Panc1 (cell line): ENCODE measurements at regions of chr2 and their contacts with region 1.

Region 1: DNA sequence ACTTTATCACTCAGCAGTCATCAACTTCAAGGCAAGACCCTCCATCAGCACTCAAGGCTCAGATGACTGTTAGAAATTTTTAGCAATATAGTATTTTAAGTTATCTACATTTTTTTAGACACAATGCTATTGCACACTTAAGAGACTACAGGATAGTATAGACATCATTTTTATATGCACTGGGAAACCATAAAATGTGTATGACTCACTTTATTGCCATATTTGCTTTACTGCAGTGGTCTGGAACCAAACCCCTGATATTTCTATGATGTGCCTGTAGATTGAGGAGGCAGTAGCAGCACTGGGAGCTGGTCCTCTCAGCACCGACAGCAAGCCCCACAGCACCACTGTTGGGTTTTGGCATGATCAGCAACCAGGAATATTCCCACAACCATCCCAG is 264.8 kb upstream of the HNRNPA3 start:
- DNase-seq: no peak
- ATAC-seq: no peak
- H3K4me3 ChIP-seq: no peak overlapping the region
- H3K27ac ChIP-seq: no peak overlapping the region
- H3K4me1 ChIP-seq: no peaks in the 10 kb centered on the region
- H3K27me3 ChIP-seq: no peaks in the 10 kb centered on the region
- CTCF ChIP-seq: no peak

Region 2: GRCh38 chr2:176212276-176212675 is 735.5 kb before region 1 on chr2:
- CTCF ChIA-PET with region 1: no interaction called
- POLR2A ChIA-PET with region 1: interaction called, 11 read pairs
- in situ Hi-C with region 1: no loop called
- intact Hi-C with region 1: no loop called
- DNase-seq: no peak
- ATAC-seq: no peak
- H3K4me3 ChIP-seq: no peak overlapping the region
- H3K27ac ChIP-seq: no peak overlapping the region
- H3K4me1 ChIP-seq: no peaks in the 10 kb centered on the region
- H3K27me3 ChIP-seq: peaks cover 6% of the 10 kb centered on the region
- CTCF ChIP-seq: no peak

Region 3: DNA sequence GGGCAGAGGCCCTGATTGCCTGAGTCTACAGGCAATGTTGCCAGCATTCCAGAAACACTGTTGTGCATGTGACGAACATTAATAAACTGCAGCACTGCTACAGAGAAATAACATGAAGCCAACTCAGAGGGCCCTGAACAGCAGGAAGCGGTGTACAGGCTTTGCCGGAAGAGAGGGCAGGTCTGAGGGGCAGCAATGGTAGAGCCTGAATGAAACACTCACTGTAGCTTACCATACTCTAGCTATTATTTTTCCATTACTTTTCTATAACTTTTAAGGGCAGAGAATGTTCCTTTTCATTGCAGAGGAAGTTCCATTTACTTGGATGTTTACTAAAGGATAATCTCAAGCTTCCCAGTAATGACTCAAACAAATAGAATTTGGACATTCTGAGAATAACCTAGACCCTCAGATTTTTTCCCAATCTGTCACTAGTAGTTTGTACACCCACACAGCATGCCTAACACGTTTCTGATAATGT is 528.1 kb before region 1 on chr2:
- CTCF ChIA-PET with region 1: no interaction called
- POLR2A ChIA-PET with region 1: no interaction called
- in situ Hi-C with region 1: no loop called
- intact Hi-C with region 1: no loop called
- DNase-seq: no peak
- ATAC-seq: no peak
- H3K4me3 ChIP-seq: no peak overlapping the region
- H3K27ac ChIP-seq: no peak overlapping the region
- H3K4me1 ChIP-seq: no peaks in the 10 kb centered on the region
- H3K27me3 ChIP-seq: no peaks in the 10 kb centered on the region
- CTCF ChIP-seq: no peak

Region 4: DNA sequence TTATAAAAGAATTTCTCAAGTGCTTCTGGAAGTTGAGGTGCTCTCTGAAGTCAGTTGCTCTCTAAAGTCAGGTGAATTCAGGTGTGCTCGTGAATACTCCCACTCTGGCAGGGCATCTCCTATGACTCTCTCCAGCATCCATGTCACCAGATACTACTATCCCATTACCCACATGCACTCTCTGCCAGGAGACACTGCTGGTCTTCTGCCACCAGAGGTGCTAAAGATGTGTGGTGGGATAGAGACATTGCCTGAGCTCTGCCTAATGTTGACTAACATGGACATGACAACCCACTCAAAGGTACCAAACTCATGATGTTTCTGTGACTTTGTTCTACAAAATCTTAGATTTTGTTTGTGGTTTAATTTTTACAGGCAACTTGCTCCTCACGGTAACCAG is 158.5 kb after region 1 on chr2:
- CTCF ChIA-PET with region 1: no interaction called
- POLR2A ChIA-PET with region 1: no interaction called
- in situ Hi-C with region 1: no loop called
- intact Hi-C with region 1: no loop called
- DNase-seq: no peak
- ATAC-seq: peak; percentile 74; the same call in 1 of the 2 replicates
- H3K4me3 ChIP-seq: no peak overlapping the region
- H3K27ac ChIP-seq: no peak overlapping the region
- H3K4me1 ChIP-seq: no peaks in the 10 kb centered on the region
- H3K27me3 ChIP-seq: no peaks in the 10 kb centered on the region
- CTCF ChIP-seq: peak; percentile 39